Left ventricle myocardium inferior (tissue), 1 donor: ENCODE measurements at regions of chr2 and their contacts with region 1.

Region 1: GRCh38 chr2:119753041-119753929 is 6.4 kb upstream of the PTPN4 start:
- DNase-seq: no peak
- H3K4me3 ChIP-seq: no peak overlapping the region
- H3K27ac ChIP-seq: no peak overlapping the region
- H3K4me1 ChIP-seq: peaks cover 11% of the 10 kb centered on the region
- H3K27me3 ChIP-seq: no peaks in the 10 kb centered on the region
- CTCF ChIP-seq: peak; percentile 84

Region 2: DNA sequence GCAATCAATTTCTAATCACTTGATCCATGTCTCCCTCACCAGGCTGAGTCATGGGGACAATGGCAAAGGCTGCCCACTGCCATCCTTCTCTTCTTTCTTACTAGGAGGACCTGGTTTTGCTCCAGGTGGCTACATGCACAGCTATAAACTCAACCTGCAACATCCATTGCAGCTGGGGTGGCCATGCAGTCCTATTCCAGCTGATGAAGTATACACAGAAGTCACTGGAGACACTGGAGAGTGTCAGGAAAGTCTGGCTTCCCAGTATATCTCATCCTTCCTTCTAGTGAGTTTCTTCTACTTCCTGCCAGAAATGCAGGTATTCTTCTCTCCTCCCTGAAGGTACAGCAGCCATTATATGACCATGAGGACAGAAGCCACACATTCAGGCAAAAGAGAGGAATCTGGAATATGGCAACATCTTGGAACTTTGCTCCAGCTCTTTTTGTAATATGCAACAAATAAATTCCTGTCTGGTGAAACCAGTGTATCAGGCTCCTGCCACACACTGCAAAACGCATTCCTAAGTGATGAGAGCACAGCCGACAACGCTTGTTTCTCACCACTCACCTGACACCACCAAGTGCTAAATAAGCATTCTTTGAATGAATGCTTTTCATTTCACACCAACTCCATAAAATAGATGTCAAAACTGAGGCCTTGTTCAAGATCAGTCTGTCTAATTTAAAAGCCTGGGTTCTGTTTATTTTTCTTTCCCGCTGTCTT is 261.3 kb before region 1 on chr2:
- intact Hi-C with region 1: no loop called
- DNase-seq: no peak
- H3K4me3 ChIP-seq: no peak overlapping the region
- H3K27ac ChIP-seq: peak overlapping the region; percentile 92
- H3K4me1 ChIP-seq: peaks cover 66% of the 10 kb centered on the region
- H3K27me3 ChIP-seq: peaks cover 18% of the 10 kb centered on the region
- CTCF ChIP-seq: no peak

Region 3: GRCh38 chr2:119820275-119820674 is 67.0 kb after region 1 on chr2:
- intact Hi-C with region 1: loop called (anchors 2 kb)
- DNase-seq: no peak
- H3K4me3 ChIP-seq: no peak overlapping the region
- H3K27ac ChIP-seq: peak overlapping the region; percentile 49
- H3K4me1 ChIP-seq: peaks cover 18% of the 10 kb centered on the region
- H3K27me3 ChIP-seq: no peaks in the 10 kb centered on the region
- CTCF ChIP-seq: no peak

Region 4: DNA sequence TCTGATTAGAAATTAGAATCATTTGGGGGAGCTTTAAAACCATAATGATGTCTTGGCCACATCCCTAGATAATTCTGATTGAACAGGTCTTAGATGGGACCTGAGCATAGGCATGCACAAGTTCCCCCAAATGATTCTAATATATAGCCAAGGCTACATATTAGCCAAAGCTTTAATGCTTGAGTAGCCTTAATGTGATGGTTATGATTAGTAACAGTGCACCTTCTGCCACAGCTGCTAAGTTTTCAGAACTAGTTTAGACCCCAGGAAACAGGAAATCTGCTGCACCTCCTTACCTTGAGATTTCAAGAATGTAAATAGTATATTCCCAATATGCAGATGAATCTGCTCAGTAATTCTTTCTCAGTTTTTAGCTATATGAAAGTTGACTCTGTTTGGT is 126.2 kb after region 1 on chr2:
- intact Hi-C with region 1: no loop called
- DNase-seq: no peak
- H3K4me3 ChIP-seq: no peak overlapping the region
- H3K27ac ChIP-seq: no peak overlapping the region
- H3K4me1 ChIP-seq: no peaks in the 10 kb centered on the region
- H3K27me3 ChIP-seq: no peaks in the 10 kb centered on the region
- CTCF ChIP-seq: no peak

Region 5: GRCh38 chr2:120174963-120175581 is 421.8 kb after region 1 on chr2:
- intact Hi-C with region 1: loop called (anchors 5 kb)
- DNase-seq: no peak
- H3K4me3 ChIP-seq: no peak overlapping the region
- H3K27ac ChIP-seq: no peak overlapping the region
- H3K4me1 ChIP-seq: peaks cover 13% of the 10 kb centered on the region
- H3K27me3 ChIP-seq: no peaks in the 10 kb centered on the region
- CTCF ChIP-seq: peak; percentile 80